ENCODE measurements at regions of chr10 and their contacts with region 1.

Region 1: GRCh38 chr10:71212318-71213126 is at the start of gene UNC5B:
- DNase-seq: peak; percentile 91 to 95 (median 94)
- ATAC-seq: peak; percentile 91
- H3K4me3 ChIP-seq: peak within 1 kb of the TSS; percentile 65 to 82
- H3K27ac ChIP-seq: peak within 1 kb of the TSS; percentile 70 to 82
- H3K4me1 ChIP-seq: peaks cover 13 to 56% of the 10 kb centered on the region in 2 donors
- H3K27me3 ChIP-seq: peaks cover 13 to 84% of the 10 kb centered on the region in 2 donors
- CTCF ChIP-seq: no peak
- polyA plus RNA-seq, gene UNC5B: 18.9 to 31.2 (median 22.7) TPM

Region 2: GRCh38 chr10:71270301-71271220 is 58.0 kb after region 1 on chr10:
- intact Hi-C with region 1: loop called in 1 of 2 experiments (anchors 10 kb)
- DNase-seq: peak in 1 of 4 donors; percentile 71
- ATAC-seq: peak; percentile 80
- H3K4me3 ChIP-seq: no peak overlapping the region
- H3K27ac ChIP-seq: no peak overlapping the region
- H3K4me1 ChIP-seq: peaks cover 3 to 39% of the 10 kb centered on the region in 2 donors
- H3K27me3 ChIP-seq: no peaks in the 10 kb centered on the region
- CTCF ChIP-seq: peak; percentile 34 to 57

Region 3: GRCh38 chr10:71435571-71436267 is 223.2 kb after region 1 on chr10:
- intact Hi-C with region 1: no loop called
- DNase-seq: no peak
- ATAC-seq: no peak
- H3K4me3 ChIP-seq: no peak overlapping the region
- H3K27ac ChIP-seq: no peak overlapping the region
- H3K4me1 ChIP-seq: peaks cover 0 to 12% of the 10 kb centered on the region in 2 donors
- H3K27me3 ChIP-seq: no peaks in the 10 kb centered on the region
- CTCF ChIP-seq: no peak

Measured in left lung (tissue), 14 donors.